Naive thymus-derived CD4-positive, alpha-beta T cell (primary cell): ENCODE measurements at regions of chr11 and their contacts with region 1.

Region 1: GRCh38 chr11:62591448-62592145 is at the start of gene TUT1:
- DNase-seq: peak; percentile 78 to 99 (median 98)
- ATAC-seq: peak; percentile 92
- H3K4me3 ChIP-seq: peak within 1 kb of the TSS; percentile 82
- H3K4me3 Mint-ChIP-seq: peak within 1 kb of the TSS; percentile 87 to 100 (median 96)
- H3K27ac ChIP-seq: peak within 1 kb of the TSS; percentile 94
- H3K27ac Mint-ChIP-seq: peak within 1 kb of the TSS; percentile 92 to 99 (median 96)
- H3K4me1 ChIP-seq: peaks cover 14 to 35% of the 10 kb centered on the region in 2 donors
- H3K4me1 Mint-ChIP-seq: peaks cover 26 to 66% (median 52%) of the 10 kb centered on the region in 7 donors
- H3K27me3 ChIP-seq: no peaks in the 10 kb centered on the region
- H3K27me3 Mint-ChIP-seq: peaks cover 0 to 4% (median 0%) of the 10 kb centered on the region in 5 donors
- total RNA-seq, gene TUT1: 34.5 to 54.6 (median 37.4) TPM

Region 2: GRCh38 chr11:62427630-62428233 is 163.9 kb before region 1 on chr11:
- CTCF ChIA-PET with region 1: interaction called, 7 read pairs
- POLR2A ChIA-PET with region 1: no interaction called
- intact Hi-C with region 1: loop called in 1 of 2 experiments (anchors 1 kb)
- DNase-seq: peak in 1 of 9 donors; percentile 34
- ATAC-seq: peak; percentile 54
- H3K4me3 ChIP-seq: no peak overlapping the region
- H3K4me3 Mint-ChIP-seq: peak overlapping the region in 3 of 10 donors; percentile 19 to 61 (median 43)
- H3K27ac ChIP-seq: no peak overlapping the region
- H3K27ac Mint-ChIP-seq: peak overlapping the region in 6 of 9 donors; percentile 26 to 91 (median 87)
- H3K4me1 ChIP-seq: peaks cover 19 to 24% of the 10 kb centered on the region in 2 donors
- H3K4me1 Mint-ChIP-seq: peaks cover 24 to 65% (median 32%) of the 10 kb centered on the region in 7 donors
- H3K27me3 ChIP-seq: no peaks in the 10 kb centered on the region
- H3K27me3 Mint-ChIP-seq: peaks cover 0 to 5% (median 0%) of the 10 kb centered on the region in 5 donors

Region 3: DNA sequence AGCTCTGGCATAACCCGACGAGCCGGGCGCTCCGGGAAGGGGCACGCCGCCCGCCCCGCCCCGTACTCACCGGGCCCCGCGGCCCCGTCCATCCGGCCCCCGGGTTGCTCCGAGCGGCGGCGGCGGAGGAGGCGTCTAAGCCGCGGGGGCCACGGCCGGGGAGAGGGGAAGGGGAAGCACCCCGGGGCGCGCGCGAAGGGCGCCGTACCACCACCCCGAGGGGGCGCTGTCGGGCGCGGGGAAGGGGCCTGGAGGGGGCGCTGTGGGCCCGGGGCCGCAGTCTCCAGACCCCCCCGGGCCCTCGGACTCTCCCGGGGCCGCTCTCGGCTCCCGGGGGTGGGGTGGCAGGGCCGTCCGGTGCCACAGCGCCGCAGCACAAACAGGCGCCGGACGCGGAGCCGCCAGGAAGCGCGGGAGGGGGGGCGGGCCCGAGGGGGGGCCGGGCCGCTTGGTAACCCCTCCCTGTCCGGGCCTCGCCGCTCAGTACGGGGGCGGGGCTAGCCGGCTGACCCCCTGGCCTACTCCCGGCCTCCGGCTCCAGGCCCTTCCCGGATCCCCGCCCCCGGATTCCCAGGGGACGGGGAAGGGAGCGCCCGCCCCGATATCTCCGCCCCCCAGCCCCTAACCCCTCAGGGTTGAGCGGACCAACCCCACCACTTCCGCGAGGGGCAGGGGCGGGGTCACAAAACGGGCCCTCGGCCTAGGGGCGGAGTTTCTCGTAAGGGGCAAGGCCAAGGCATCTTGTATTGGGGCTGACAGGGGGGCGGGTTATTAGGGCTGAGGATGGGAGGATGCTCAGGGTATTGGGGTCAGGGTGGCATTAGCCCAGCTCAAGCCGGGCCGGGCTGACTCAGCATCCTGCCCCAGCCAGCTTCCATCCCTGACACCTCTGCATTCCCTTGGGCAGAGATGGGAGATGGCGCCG is 21.0 kb after region 1 on chr11 and contains the starts of genes EML3 and ROM1:
- CTCF ChIA-PET with region 1: interaction called, 27 read pairs
- POLR2A ChIA-PET with region 1: interaction called, 219 read pairs
- intact Hi-C with region 1: loop called (anchors 1 kb)
- DNase-seq: peak; percentile 74 to 96 (median 83)
- ATAC-seq: peak; percentile 90
- H3K4me3 ChIP-seq: peak within 1 kb of the TSS; percentile 99
- H3K4me3 Mint-ChIP-seq: peak within 1 kb of the TSS; percentile 89 to 100 (median 96)
- H3K27ac ChIP-seq: peak within 1 kb of the TSS; percentile 92
- H3K27ac Mint-ChIP-seq: peak within 1 kb of the TSS; percentile 93 to 100 (median 97)
- H3K4me1 ChIP-seq: peaks cover 19 to 32% of the 10 kb centered on the region in 2 donors
- H3K4me1 Mint-ChIP-seq: peaks cover 31 to 56% (median 48%) of the 10 kb centered on the region in 7 donors
- H3K27me3 ChIP-seq: no peaks in the 10 kb centered on the region
- H3K27me3 Mint-ChIP-seq: no peaks in the 10 kb centered on the region
- total RNA-seq, gene EML3: 152 to 209 (median 188) TPM
- total RNA-seq, gene ROM1: 1.2 to 2.4 (median 2.0) TPM

Region 4: GRCh38 chr11:62665075-62665598 is 73.5 kb after region 1 on chr11 and contains the starts of genes C11orf98 and CSKMT:
- CTCF ChIA-PET with region 1: interaction called, 17 read pairs
- POLR2A ChIA-PET with region 1: interaction called, 269 read pairs
- intact Hi-C with region 1: loop called (anchors 1 kb)
- DNase-seq: peak; percentile 90 to 99 (median 95)
- ATAC-seq: peak; percentile 97
- H3K4me3 ChIP-seq: peak within 1 kb of the TSS; percentile 85
- H3K4me3 Mint-ChIP-seq: peak within 1 kb of the TSS; percentile 93 to 98 (median 96)
- H3K27ac ChIP-seq: peak within 1 kb of the TSS; percentile 85
- H3K27ac Mint-ChIP-seq: peak within 1 kb of the TSS; percentile 89 to 97 (median 93)
- H3K4me1 ChIP-seq: peaks cover 16 to 21% of the 10 kb centered on the region in 2 donors
- H3K4me1 Mint-ChIP-seq: peaks cover 13 to 45% (median 32%) of the 10 kb centered on the region in 7 donors
- H3K27me3 ChIP-seq: no peaks in the 10 kb centered on the region
- H3K27me3 Mint-ChIP-seq: no peaks in the 10 kb centered on the region
- total RNA-seq, gene C11orf98: 23.2 to 103 (median 47.6) TPM
- total RNA-seq, gene CSKMT: 8.9 to 29.3 (median 23.7) TPM

Region 5: DNA sequence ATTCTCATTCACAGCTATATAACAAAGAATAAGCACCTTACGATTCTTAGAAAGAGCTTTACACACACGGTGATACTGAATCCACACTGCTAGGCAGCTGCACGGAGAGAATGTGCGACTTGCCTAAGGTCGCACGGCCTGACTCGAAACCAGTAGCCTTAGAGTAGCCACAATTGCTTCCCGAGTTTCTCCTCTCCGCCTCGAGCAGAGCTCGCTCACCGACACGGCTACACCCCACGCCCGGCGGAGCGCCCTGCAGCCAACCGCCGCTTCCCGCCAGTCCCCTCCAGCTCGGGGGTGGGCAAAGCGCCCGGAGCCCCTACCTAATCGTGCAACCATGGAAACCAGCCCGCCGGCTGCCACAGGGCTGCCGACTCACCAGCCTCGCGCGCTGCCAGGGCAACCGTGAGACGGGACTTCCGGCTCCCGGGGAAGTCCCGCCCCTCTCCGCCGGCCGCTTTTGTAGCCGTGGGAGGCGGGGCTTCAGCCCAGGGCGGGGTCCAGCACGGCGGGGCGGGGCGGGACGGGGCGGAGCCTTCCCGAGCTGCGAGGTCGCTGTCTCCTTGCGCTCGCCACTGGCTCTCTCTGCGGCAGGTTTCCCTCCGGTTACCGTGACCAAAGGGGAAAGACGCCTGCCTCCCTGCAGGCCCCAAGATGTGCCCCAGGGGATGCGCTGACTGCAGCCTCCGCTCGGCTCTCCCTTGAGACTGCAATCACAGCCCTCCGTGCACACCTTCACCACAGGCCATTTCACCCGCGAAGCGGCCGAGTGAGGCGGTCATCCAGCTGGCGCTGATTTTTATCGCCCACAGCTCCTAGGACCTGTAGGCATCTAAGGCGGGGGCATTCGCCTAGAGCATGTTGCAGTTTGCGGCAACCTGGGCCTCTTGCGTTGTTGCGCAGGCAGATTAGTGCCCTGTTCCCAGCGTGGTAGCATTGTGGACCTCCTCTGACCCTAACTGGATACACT is 114.6 kb after region 1 on chr11:
- CTCF ChIA-PET with region 1: interaction called, 10 read pairs
- POLR2A ChIA-PET with region 1: interaction called, 76 read pairs
- intact Hi-C with region 1: loop called (anchors 1 kb)
- DNase-seq: peak; percentile 86 to 96 (median 90)
- ATAC-seq: peak; percentile 79
- H3K4me3 ChIP-seq: peak overlapping the region; percentile 74
- H3K4me3 Mint-ChIP-seq: peak overlapping the region; percentile 83 to 97 (median 90)
- H3K27ac ChIP-seq: peak overlapping the region; percentile 73
- H3K27ac Mint-ChIP-seq: peak overlapping the region; percentile 69 to 92 (median 87)
- H3K4me1 ChIP-seq: peaks cover 41 to 46% of the 10 kb centered on the region in 2 donors
- H3K4me1 Mint-ChIP-seq: peaks cover 17 to 49% (median 44%) of the 10 kb centered on the region in 7 donors
- H3K27me3 ChIP-seq: no peaks in the 10 kb centered on the region
- H3K27me3 Mint-ChIP-seq: no peaks in the 10 kb centered on the region

Region 6: GRCh38 chr11:62787005-62787759 is 195.6 kb after region 1 on chr11 and contains the start of gene TMEM179B:
- CTCF ChIA-PET with region 1: interaction called, 5 read pairs
- POLR2A ChIA-PET with region 1: interaction called, 17 read pairs
- intact Hi-C with region 1: loop called in 1 of 2 experiments (anchors 1 kb)
- DNase-seq: peak; percentile 87 to 98 (median 95)
- ATAC-seq: peak; percentile 83
- H3K4me3 ChIP-seq: peak within 1 kb of the TSS; percentile 82
- H3K4me3 Mint-ChIP-seq: peak within 1 kb of the TSS; percentile 93 to 97 (median 96)
- H3K27ac ChIP-seq: peak within 1 kb of the TSS; percentile 93
- H3K27ac Mint-ChIP-seq: peak within 1 kb of the TSS; percentile 91 to 99 (median 96)
- H3K4me1 ChIP-seq: peaks cover 32 to 38% of the 10 kb centered on the region in 2 donors
- H3K4me1 Mint-ChIP-seq: peaks cover 22 to 59% (median 42%) of the 10 kb centered on the region in 7 donors
- H3K27me3 ChIP-seq: no peaks in the 10 kb centered on the region
- H3K27me3 Mint-ChIP-seq: no peaks in the 10 kb centered on the region
- total RNA-seq, gene TMEM179B: 23.2 to 72.3 (median 50.9) TPM

Region 7: GRCh38 chr11:62880803-62881578 is 289.4 kb after region 1 on chr11 and contains the start of gene SLC3A2:
- CTCF ChIA-PET with region 1: interaction called, 6 read pairs
- POLR2A ChIA-PET with region 1: interaction called, 11 read pairs
- intact Hi-C with region 1: loop called in 1 of 2 experiments (anchors 1 kb)
- DNase-seq: peak; percentile 80 to 90 (median 87)
- ATAC-seq: peak; percentile 88
- H3K4me3 ChIP-seq: peak within 1 kb of the TSS; percentile 97
- H3K4me3 Mint-ChIP-seq: peak within 1 kb of the TSS; percentile 98 to 100 (median 100)
- H3K27ac ChIP-seq: peak within 1 kb of the TSS; percentile 94
- H3K27ac Mint-ChIP-seq: peak within 1 kb of the TSS; percentile 98 to 100 (median 99)
- H3K4me1 ChIP-seq: peaks cover 34 to 35% of the 10 kb centered on the region in 2 donors
- H3K4me1 Mint-ChIP-seq: peaks cover 34 to 60% (median 53%) of the 10 kb centered on the region in 7 donors
- H3K27me3 ChIP-seq: no peaks in the 10 kb centered on the region
- H3K27me3 Mint-ChIP-seq: peaks cover 0 to 4% (median 0%) of the 10 kb centered on the region in 5 donors
- total RNA-seq, gene SLC3A2: 159 to 239 (median 218) TPM